Activated B cell treated with CpG ODN at 0.5 μM for 24 hours (primary cell): ENCODE measurements at regions of chr11 and their contacts with region 1.

Region 1: GRCh38 chr11:69101115-69101791 is 52.5 kb downstream of the TPCN2 start:
- DNase-seq: peak; percentile 78
- ATAC-seq: peak; percentile 99
- H3K4me3 Mint-ChIP-seq: no peak overlapping the region
- H3K27ac Mint-ChIP-seq: no peak overlapping the region
- H3K4me1 Mint-ChIP-seq: no peaks in the 10 kb centered on the region
- H3K27me3 Mint-ChIP-seq: peaks cover 6% of the 10 kb centered on the region
- CTCF ChIP-seq: peak; percentile 56

Region 2: GRCh38 chr11:69211920-69212571 is 110.8 kb after region 1 on chr11:
- CTCF ChIA-PET with region 1: no interaction called
- POLR2A ChIA-PET with region 1: no interaction called
- intact Hi-C with region 1: loop called (anchors 5 kb)
- DNase-seq: peak; percentile 10
- ATAC-seq: no peak
- H3K4me3 Mint-ChIP-seq: no peak overlapping the region
- H3K27ac Mint-ChIP-seq: peak overlapping the region; percentile 13
- H3K4me1 Mint-ChIP-seq: peaks cover 33% of the 10 kb centered on the region
- H3K27me3 Mint-ChIP-seq: peaks cover 7% of the 10 kb centered on the region
- CTCF ChIP-seq: no peak

Region 3: DNA sequence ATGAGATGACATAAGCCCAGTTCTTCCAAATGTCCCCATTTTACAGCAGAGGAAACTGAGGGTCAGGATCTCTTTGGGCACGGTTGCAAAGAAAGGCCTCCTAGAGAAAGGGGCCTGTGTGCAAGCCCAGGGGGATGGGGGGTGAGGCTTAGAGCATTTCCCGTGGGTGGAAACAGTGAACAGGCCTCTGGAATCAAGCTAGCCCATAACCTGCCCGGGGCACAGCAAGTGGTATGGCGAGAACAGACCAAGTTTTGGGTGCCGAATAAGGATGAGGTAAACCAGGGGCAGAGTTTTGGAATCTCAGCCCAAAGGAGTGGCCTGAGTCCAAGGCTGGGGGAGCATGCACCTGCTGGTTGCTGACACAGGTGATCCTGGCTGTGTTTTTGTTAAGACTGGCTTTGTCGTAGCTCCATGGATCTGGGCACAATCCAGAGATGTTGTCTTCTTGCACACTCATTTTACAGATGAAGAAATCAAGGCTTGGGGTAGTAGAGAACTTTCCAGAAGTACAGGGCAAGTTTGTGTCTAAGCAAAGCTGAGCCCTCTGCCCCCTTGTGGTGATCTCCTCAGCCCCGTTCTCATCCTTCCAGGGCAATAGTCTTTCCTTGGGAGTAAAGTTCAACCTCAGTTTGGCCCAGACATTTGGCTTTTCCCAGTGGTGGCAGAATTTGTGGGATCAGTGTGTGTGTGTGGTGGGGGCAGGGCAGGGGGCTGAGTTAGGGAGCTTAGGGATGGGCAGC is 139.2 kb after region 1 on chr11:
- CTCF ChIA-PET with region 1: no interaction called
- POLR2A ChIA-PET with region 1: no interaction called
- intact Hi-C with region 1: loop called (anchors 2 kb)
- DNase-seq: no peak
- ATAC-seq: no peak
- H3K4me3 Mint-ChIP-seq: no peak overlapping the region
- H3K27ac Mint-ChIP-seq: no peak overlapping the region
- H3K4me1 Mint-ChIP-seq: peaks cover 8% of the 10 kb centered on the region
- H3K27me3 Mint-ChIP-seq: peaks cover 2% of the 10 kb centered on the region
- CTCF ChIP-seq: no peak

Region 4: DNA sequence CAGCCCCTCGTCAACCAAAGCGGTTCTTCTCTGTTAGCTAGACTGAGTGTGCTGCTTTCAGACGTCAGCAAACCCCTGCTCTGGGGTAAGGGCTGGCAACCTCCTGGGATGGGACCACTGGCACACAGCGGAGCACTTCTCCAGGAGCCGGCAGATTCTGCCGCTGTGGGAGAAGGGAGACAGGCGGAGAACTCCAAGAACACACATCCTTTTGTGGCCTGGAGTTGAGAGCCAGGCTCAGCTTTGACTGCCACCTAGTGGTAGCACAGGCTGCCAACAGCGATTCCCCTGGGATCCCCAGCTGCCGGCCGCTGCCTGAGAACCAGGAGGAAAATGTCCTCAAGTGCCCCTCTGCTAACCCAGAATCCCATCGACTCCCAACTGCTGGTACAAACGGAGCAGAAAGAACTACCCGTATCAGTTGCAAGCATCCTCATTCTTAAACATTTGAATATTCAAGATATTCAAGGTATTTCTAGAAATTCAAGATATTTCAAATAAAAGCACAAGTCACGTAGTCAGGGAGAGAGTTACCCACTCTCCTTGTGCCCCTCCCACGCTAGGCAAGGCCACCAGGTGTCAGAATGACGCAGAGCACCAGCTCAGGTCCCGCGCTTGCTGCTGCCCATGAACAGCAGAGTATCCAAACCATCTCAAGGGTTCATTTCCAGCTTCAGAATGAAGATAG is 569.0 kb after region 1 on chr11:
- CTCF ChIA-PET with region 1: interaction called, 17 read pairs
- POLR2A ChIA-PET with region 1: no interaction called
- intact Hi-C with region 1: loop called (anchors 1 kb)
- DNase-seq: peak; percentile 58
- ATAC-seq: peak; percentile 31
- H3K4me3 Mint-ChIP-seq: peak overlapping the region; percentile 24
- H3K27ac Mint-ChIP-seq: no peak overlapping the region
- H3K4me1 Mint-ChIP-seq: peaks cover 28% of the 10 kb centered on the region
- H3K27me3 Mint-ChIP-seq: peaks cover under 1% of the 10 kb centered on the region
- CTCF ChIP-seq: peak; percentile 27